ENCODE measurements at regions of chr3 and their contacts with region 1.

Region 1: DNA sequence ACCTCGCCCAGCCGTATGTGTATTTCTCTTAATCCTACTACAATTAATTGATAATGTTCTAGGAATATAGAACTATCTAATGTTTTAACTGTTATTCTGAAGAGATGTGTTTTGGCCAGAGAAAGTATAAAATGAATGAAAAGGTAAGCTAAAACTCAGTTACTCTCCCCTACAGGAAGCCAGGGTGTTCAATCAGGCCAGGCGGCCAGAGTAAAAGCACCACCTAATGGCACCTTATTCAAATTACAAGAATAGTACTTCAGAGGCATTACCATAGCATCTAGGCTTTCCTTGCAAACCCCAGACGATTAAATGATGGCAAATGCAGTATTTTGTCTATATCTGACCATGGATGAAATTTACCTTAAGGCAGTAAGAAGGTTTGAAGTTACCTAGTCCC is 10.4 kb downstream of the SLC12A8 start:
- DNase-seq: peak in 1 of 35 experiments; percentile 42
- ATAC-seq: no peak
- H3K4me3 ChIP-seq: no peak overlapping the region
- H3K4me3 Mint-ChIP-seq: no peak overlapping the region
- H3K27ac ChIP-seq: no peak overlapping the region
- H3K27ac Mint-ChIP-seq: no peak overlapping the region
- H3K4me1 ChIP-seq: no peaks in the 10 kb centered on the region
- H3K4me1 Mint-ChIP-seq: no peaks in the 10 kb centered on the region
- H3K27me3 ChIP-seq: peaks cover 0 to 3% of the 10 kb centered on the region in 2 experiments
- H3K27me3 Mint-ChIP-seq: peaks cover 0 to 4% of the 10 kb centered on the region in 2 donors

Region 2: GRCh38 chr3:125186261-125186787 is 15.9 kb before region 1 on chr3:
- CTCF ChIA-PET with region 1: no interaction called
- POLR2A ChIA-PET with region 1: no interaction called
- DNase-seq: no peak
- ATAC-seq: no peak
- H3K4me3 ChIP-seq: no peak overlapping the region
- H3K4me3 Mint-ChIP-seq: no peak overlapping the region
- H3K27ac ChIP-seq: no peak overlapping the region
- H3K27ac Mint-ChIP-seq: no peak overlapping the region
- H3K4me1 ChIP-seq: no peaks in the 10 kb centered on the region
- H3K4me1 Mint-ChIP-seq: peaks cover 0 to 9% (median 3%) of the 10 kb centered on the region in 3 donors
- H3K27me3 ChIP-seq: peaks cover 0 to 4% of the 10 kb centered on the region in 2 experiments
- H3K27me3 Mint-ChIP-seq: no peaks in the 10 kb centered on the region

Region 3: GRCh38 chr3:125231895-125232294 is 29.7 kb after region 1 on chr3:
- CTCF ChIA-PET with region 1: no interaction called
- POLR2A ChIA-PET with region 1: no interaction called
- DNase-seq: no peak
- ATAC-seq: no peak
- H3K4me3 ChIP-seq: no peak overlapping the region
- H3K4me3 Mint-ChIP-seq: no peak overlapping the region
- H3K27ac ChIP-seq: no peak overlapping the region
- H3K27ac Mint-ChIP-seq: no peak overlapping the region
- H3K4me1 ChIP-seq: no peaks in the 10 kb centered on the region
- H3K4me1 Mint-ChIP-seq: peaks cover 0 to 4% (median 0%) of the 10 kb centered on the region in 3 donors
- H3K27me3 ChIP-seq: no peaks in the 10 kb centered on the region
- H3K27me3 Mint-ChIP-seq: no peaks in the 10 kb centered on the region

Region 4: DNA sequence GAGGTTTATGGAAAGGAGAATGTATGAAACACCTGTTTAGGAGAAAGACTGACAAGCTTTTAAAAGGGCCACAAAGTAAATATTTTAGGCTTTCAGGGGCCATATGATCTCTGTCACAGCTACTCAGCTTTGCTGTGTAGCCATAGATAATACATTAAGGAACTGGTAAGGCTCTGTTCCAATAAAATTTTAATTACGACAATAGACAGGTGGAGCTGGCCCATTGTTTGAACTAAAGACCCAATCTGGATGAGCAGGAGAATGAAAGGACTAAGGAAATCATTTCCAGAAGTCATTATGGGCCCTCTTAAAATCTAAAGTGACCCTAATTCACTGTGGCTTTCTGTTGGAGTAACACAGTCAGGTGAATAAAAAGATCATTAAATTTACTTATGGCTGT is 58.8 kb after region 1 on chr3:
- CTCF ChIA-PET with region 1: interaction called in 1 of 2 experiments, 10 read pairs
- POLR2A ChIA-PET with region 1: no interaction called
- DNase-seq: no peak
- ATAC-seq: no peak
- H3K4me3 ChIP-seq: no peak overlapping the region
- H3K4me3 Mint-ChIP-seq: no peak overlapping the region
- H3K27ac ChIP-seq: no peak overlapping the region
- H3K27ac Mint-ChIP-seq: peak overlapping the region in 1 of 2 donors; percentile 28
- H3K4me1 ChIP-seq: no peaks in the 10 kb centered on the region
- H3K4me1 Mint-ChIP-seq: peaks cover 3 to 20% (median 6%) of the 10 kb centered on the region in 3 donors
- H3K27me3 ChIP-seq: no peaks in the 10 kb centered on the region
- H3K27me3 Mint-ChIP-seq: no peaks in the 10 kb centered on the region

Region 5: DNA sequence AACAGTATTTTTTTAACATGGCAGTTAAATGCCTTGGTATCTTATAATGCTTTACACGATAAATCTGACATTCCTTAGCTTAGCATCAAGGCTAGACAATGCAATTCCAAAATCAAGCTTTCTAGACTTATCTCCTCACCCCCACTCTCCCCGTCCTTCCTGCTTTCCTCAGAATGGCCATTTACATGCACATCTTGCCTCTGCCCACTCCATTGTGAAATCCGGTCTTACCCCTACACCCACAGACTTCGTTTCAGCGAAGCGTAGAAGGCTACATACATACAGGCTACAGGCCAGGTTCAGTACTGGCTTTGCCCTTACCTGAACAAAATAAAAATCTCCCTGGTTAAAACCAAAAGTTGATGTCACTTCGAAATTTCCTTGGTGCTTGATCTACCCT is 68.9 kb after region 1 on chr3:
- CTCF ChIA-PET with region 1: no interaction called
- POLR2A ChIA-PET with region 1: no interaction called
- DNase-seq: no peak
- ATAC-seq: no peak
- H3K4me3 ChIP-seq: no peak overlapping the region
- H3K4me3 Mint-ChIP-seq: no peak overlapping the region
- H3K27ac ChIP-seq: no peak overlapping the region
- H3K27ac Mint-ChIP-seq: no peak overlapping the region
- H3K4me1 ChIP-seq: no peaks in the 10 kb centered on the region
- H3K4me1 Mint-ChIP-seq: peaks cover 21 to 27% (median 22%) of the 10 kb centered on the region in 3 donors
- H3K27me3 ChIP-seq: no peaks in the 10 kb centered on the region
- H3K27me3 Mint-ChIP-seq: no peaks in the 10 kb centered on the region

Region 6: GRCh38 chr3:126646674-126647073 is 1444.5 kb after region 1 on chr3:
- CTCF ChIA-PET with region 1: no interaction called
- POLR2A ChIA-PET with region 1: no interaction called
- DNase-seq: no peak
- ATAC-seq: no peak
- H3K4me3 ChIP-seq: no peak overlapping the region
- H3K4me3 Mint-ChIP-seq: no peak overlapping the region
- H3K27ac ChIP-seq: no peak overlapping the region
- H3K27ac Mint-ChIP-seq: no peak overlapping the region
- H3K4me1 ChIP-seq: no peaks in the 10 kb centered on the region
- H3K4me1 Mint-ChIP-seq: no peaks in the 10 kb centered on the region
- H3K27me3 ChIP-seq: no peaks in the 10 kb centered on the region
- H3K27me3 Mint-ChIP-seq: peaks cover 4 to 13% of the 10 kb centered on the region in 2 donors